ENCODE measurements at regions of chr5 and their contacts with region 1.

Region 1: DNA sequence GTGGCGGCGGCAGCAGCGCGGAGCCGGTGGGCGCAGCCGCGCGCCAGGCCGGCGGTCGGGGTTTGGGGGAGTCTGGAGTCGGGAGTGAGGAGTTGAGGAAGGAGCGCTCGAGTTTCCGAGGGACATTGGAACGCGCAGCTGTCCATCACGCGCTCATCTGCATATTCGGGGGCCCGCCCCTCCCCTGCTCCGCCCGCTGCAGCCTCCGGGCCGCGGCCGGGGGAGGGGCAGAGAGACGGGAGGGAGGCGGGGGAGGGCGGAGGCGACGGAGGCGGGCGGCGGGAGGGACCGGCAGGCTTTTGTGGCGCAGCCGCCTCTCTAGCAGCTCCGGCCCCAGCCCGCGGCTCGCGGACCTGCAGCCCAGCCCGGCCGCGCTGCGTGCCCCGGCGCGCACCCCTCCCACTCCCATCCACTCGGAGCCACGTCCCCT is at the start of gene IRX2:
- DNase-seq: peak; percentile 92
- ATAC-seq: peak; percentile 62
- H3K4me3 Mint-ChIP-seq: peak within 1 kb of the TSS; percentile 87
- H3K27ac Mint-ChIP-seq: 0 out of 2 replicates have a peak within 1 kb of the TSS, but pooled peaks have one; percentile 32
- H3K4me1 Mint-ChIP-seq: peaks cover 42% of the 10 kb centered on the region
- H3K27me3 Mint-ChIP-seq: peaks cover 63% of the 10 kb centered on the region
- CTCF ChIP-seq: no peak
- total RNA-seq, gene IRX2: 51.5 to 63.2 TPM (median 52.0 TPM) in 3 replicates

Region 2: GRCh38 chr5:2465383-2465782 is 286.2 kb before region 1 on chr5:
- CTCF ChIA-PET with region 1: no interaction called
- POLR2A ChIA-PET with region 1: no interaction called
- DNase-seq: peak; percentile 19
- ATAC-seq: peak; percentile 73
- H3K4me3 Mint-ChIP-seq: no peak overlapping the region
- H3K27ac Mint-ChIP-seq: no peak overlapping the region
- H3K4me1 Mint-ChIP-seq: peaks cover 21% of the 10 kb centered on the region
- H3K27me3 Mint-ChIP-seq: no peaks in the 10 kb centered on the region
- CTCF ChIP-seq: no peak

Region 3: DNA sequence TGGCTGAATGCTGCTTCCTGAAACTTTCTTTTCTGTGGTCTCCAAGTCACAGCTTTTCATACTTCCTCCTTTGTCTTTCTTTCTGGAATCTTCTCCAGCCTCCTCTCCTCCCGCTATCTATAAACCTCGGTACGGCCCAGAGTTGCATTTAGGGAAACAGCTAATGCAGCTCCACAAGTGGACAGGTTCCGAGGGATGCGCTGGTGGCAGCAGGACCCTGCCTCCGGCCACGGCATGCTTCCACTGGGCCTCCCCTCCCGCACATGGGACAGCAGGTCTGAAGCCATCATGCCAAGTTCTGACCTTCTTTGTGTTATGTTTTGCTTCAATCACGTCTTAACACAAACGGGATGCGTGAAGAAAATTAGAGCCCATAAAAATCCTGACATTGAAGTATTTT is 137.1 kb before region 1 on chr5:
- CTCF ChIA-PET with region 1: no interaction called
- POLR2A ChIA-PET with region 1: no interaction called
- DNase-seq: no peak
- ATAC-seq: no peak
- H3K4me3 Mint-ChIP-seq: no peak overlapping the region
- H3K27ac Mint-ChIP-seq: no peak overlapping the region
- H3K4me1 Mint-ChIP-seq: no peaks in the 10 kb centered on the region
- H3K27me3 Mint-ChIP-seq: no peaks in the 10 kb centered on the region; the same call in 1 of the 2 replicates
- CTCF ChIP-seq: no peak

Region 4: GRCh38 chr5:2739360-2740050 is 12.1 kb before region 1 on chr5:
- CTCF ChIA-PET with region 1: interaction called, 3 read pairs
- POLR2A ChIA-PET with region 1: interaction called, 18 read pairs
- DNase-seq: peak; percentile 38
- ATAC-seq: peak; percentile 12
- H3K4me3 Mint-ChIP-seq: peak overlapping the region; percentile 55
- H3K27ac Mint-ChIP-seq: no peak overlapping the region
- H3K4me1 Mint-ChIP-seq: peaks cover 49% of the 10 kb centered on the region
- H3K27me3 Mint-ChIP-seq: peaks cover 91% of the 10 kb centered on the region
- CTCF ChIP-seq: no peak

Region 5: DNA sequence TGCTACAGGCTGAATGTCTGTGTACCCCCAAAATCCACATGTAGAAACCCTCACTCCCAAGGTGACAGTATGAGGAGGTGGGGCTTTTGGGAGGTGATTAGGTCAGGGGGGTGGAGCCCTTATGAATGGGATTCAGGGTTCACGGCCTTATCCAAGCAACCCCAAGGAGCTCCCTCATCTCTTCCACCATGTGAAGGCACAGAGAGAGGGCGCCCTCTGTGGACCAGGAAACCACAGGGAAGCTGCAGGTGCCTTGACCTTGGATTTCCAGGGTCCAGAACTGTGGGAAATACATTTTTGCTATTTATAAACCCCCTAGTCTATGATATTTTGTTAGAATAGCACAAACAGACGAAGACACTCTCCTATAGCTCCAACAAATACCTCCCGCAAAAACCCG is 53.5 kb after region 1 on chr5:
- CTCF ChIA-PET with region 1: interaction called, 23 read pairs
- POLR2A ChIA-PET with region 1: interaction called, 6 read pairs
- DNase-seq: peak; percentile 75
- ATAC-seq: peak; percentile 98
- H3K4me3 Mint-ChIP-seq: no peak overlapping the region
- H3K27ac Mint-ChIP-seq: no peak overlapping the region
- H3K4me1 Mint-ChIP-seq: 0 out of 2 replicates have a peak, but pooled peaks cover 3% of the 10 kb centered on the region
- H3K27me3 Mint-ChIP-seq: no peaks in the 10 kb centered on the region
- CTCF ChIP-seq: peak; percentile 31; the same call in 1 of the 2 replicates

Region 6: GRCh38 chr5:2832394-2832793 is 80.8 kb after region 1 on chr5:
- CTCF ChIA-PET with region 1: no interaction called
- POLR2A ChIA-PET with region 1: no interaction called
- DNase-seq: peak; percentile 31
- ATAC-seq: peak; percentile 44; the same call in 1 of the 2 replicates
- H3K4me3 Mint-ChIP-seq: no peak overlapping the region
- H3K27ac Mint-ChIP-seq: no peak overlapping the region
- H3K4me1 Mint-ChIP-seq: peaks cover 6% of the 10 kb centered on the region
- H3K27me3 Mint-ChIP-seq: no peaks in the 10 kb centered on the region; the same call in 1 of the 2 replicates
- CTCF ChIP-seq: no peak

Region 7: GRCh38 chr5:2877522-2877921 is 125.9 kb after region 1 on chr5:
- CTCF ChIA-PET with region 1: no interaction called
- POLR2A ChIA-PET with region 1: no interaction called
- DNase-seq: no peak
- ATAC-seq: no peak
- H3K4me3 Mint-ChIP-seq: no peak overlapping the region
- H3K27ac Mint-ChIP-seq: no peak overlapping the region
- H3K4me1 Mint-ChIP-seq: 0 out of 2 replicates have a peak, but pooled peaks cover 2% of the 10 kb centered on the region
- H3K27me3 Mint-ChIP-seq: no peaks in the 10 kb centered on the region
- CTCF ChIP-seq: no peak

Measured in WTC11 (cell line).